Right cardiac atrium (tissue), 5 donors: ENCODE measurements at regions of chr9 and their contacts with region 1.

Region 1: GRCh38 chr9:68779558-68780384 is 74.7 kb downstream of the PIP5K1B start:
- DNase-seq: peak; percentile 96 to 98 (median 98)
- ATAC-seq: peak; percentile 97
- H3K4me3 ChIP-seq: peak overlapping the region; percentile 74
- H3K27ac ChIP-seq: peak overlapping the region; percentile 93
- H3K4me1 ChIP-seq: peaks cover 3% of the 10 kb centered on the region
- H3K27me3 ChIP-seq: no peaks in the 10 kb centered on the region

Region 2: DNA sequence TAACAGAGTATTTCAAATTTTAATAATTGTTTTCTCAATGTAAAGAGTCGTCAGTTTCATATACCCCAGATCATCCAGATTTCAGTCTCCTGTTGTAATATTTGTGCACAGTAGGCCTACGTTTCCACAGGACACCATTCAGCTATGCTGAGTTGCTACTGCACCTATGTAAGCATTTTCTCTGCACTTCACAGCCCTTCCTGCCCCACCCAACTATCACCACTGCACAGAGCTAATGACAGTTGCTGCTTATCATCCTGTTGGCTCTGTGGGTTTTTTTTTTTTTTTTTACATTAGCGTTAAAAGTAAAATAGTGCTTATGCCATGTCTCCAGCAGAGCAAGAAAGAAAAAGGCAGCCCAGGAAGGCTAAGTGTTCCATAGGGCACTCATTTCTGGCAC is 240.0 kb after region 1 on chr9:
- intact Hi-C with region 1: loop called in 1 of 4 experiments (anchors 10 kb)
- DNase-seq: no peak
- ATAC-seq: no peak
- H3K4me3 ChIP-seq: no peak overlapping the region
- H3K27ac ChIP-seq: no peak overlapping the region
- H3K4me1 ChIP-seq: no peaks in the 10 kb centered on the region
- H3K27me3 ChIP-seq: no peaks in the 10 kb centered on the region